GM12878 (cell line): ENCODE measurements at regions of chr17 and their contacts with region 1.

Region 1: GRCh38 chr17:35082073-35082657 is 18.7 kb upstream of the RFFL start:
- DNase-seq: no peak
- ATAC-seq: peak; percentile 59
- H3K4me3 ChIP-seq: peak overlapping the region; percentile 28; the same call in 1 of the 2 replicates
- H3K27ac ChIP-seq: peak overlapping the region; percentile 83
- H3K4me1 ChIP-seq: peaks cover 37% of the 10 kb centered on the region
- H3K27me3 ChIP-seq: no peaks in the 10 kb centered on the region
- CTCF ChIP-seq: no peak
- EP300 ChIP-seq: no peak
- POLR2A ChIP-seq: no peak
- RAD21 ChIP-seq: no peak

Region 2: GRCh38 chr17:35052241-35052610 is 29.9 kb before region 1 on chr17:
- CTCF ChIA-PET with region 1: interaction called, 10 read pairs
- POLR2A ChIA-PET with region 1: interaction called, 13 read pairs
- RAD21 ChIA-PET with region 1: interaction called, 452 read pairs
- SMC1A ChIA-PET with region 1: interaction called, 534 read pairs
- in situ Hi-C with region 1: no loop called
- intact Hi-C with region 1: no loop called
- DNase-seq: no peak
- ATAC-seq: peak; percentile 47
- H3K4me3 ChIP-seq: peak overlapping the region; percentile 4; the same call in 1 of the 2 replicates
- H3K27ac ChIP-seq: peak overlapping the region; percentile 93
- H3K4me1 ChIP-seq: peaks cover 27% of the 10 kb centered on the region
- H3K27me3 ChIP-seq: no peaks in the 10 kb centered on the region
- CTCF ChIP-seq: no peak
- EP300 ChIP-seq: no peak
- POLR2A ChIP-seq: no peak
- RAD21 ChIP-seq: no peak

Region 3: DNA sequence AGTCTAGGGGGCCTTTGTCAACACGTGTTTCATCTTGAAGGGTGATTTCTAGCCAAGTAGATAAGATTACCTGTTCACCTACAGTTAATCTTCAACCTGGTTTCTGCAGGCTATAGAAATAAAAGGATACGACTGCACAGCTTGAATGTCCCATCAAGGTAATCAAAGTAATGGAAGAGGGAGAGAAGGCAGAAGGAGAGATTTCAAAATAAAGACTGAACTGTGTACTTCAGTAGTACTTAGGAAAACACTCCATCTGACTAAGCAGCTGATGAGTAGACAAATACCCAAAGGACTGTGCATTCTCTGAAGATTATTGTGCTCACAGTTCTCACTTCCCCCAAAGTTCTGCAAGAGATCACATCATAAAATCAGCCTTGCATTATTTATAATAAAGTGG is 12.9 kb before region 1 on chr17:
- CTCF ChIA-PET with region 1: interaction called, 23 read pairs
- POLR2A ChIA-PET with region 1: interaction called, 115 read pairs
- RAD21 ChIA-PET with region 1: interaction called, 452 read pairs
- SMC1A ChIA-PET with region 1: interaction called, 534 read pairs
- in situ Hi-C with region 1: no loop called
- intact Hi-C with region 1: no loop called
- DNase-seq: no peak
- ATAC-seq: peak; percentile 68
- H3K4me3 ChIP-seq: no peak overlapping the region
- H3K27ac ChIP-seq: peak overlapping the region; percentile 33
- H3K4me1 ChIP-seq: peaks cover 33% of the 10 kb centered on the region
- H3K27me3 ChIP-seq: no peaks in the 10 kb centered on the region
- CTCF ChIP-seq: no peak
- EP300 ChIP-seq: no peak
- POLR2A ChIP-seq: no peak
- RAD21 ChIP-seq: no peak

Region 4: DNA sequence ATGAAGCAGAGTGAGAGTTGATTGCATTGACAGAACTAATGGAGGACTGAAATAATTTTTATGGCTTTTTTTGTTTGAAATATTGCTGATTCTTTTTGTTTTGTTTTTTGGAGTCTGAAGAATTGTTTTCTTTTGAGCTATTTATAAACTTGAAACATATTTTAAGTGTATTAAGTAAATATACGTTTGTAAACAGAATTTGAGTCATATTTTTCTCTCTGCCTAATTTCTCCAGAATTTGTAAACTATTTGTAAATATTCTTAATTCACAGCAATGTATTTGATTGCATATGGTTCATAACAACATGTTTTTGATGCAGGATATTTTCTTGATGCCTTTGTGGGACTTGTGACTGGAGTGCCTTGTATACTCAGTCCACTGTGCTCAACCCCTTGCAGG is 240.6 kb after region 1 on chr17:
- CTCF ChIA-PET with region 1: no interaction called
- POLR2A ChIA-PET with region 1: no interaction called
- RAD21 ChIA-PET with region 1: no interaction called
- SMC1A ChIA-PET with region 1: no interaction called
- in situ Hi-C with region 1: no loop called
- intact Hi-C with region 1: no loop called
- DNase-seq: no peak
- ATAC-seq: no peak
- H3K4me3 ChIP-seq: no peak overlapping the region
- H3K27ac ChIP-seq: no peak overlapping the region
- H3K4me1 ChIP-seq: no peaks in the 10 kb centered on the region
- H3K27me3 ChIP-seq: peaks cover 0 to 6% of the 10 kb centered on the region in 2 experiments; a peak in 1 of 4 replicates
- CTCF ChIP-seq: no peak
- EP300 ChIP-seq: no peak
- POLR2A ChIP-seq: no peak
- RAD21 ChIP-seq: no peak